Thyroid gland (tissue), 4 donors: ENCODE measurements at regions of chr1 and their contacts with region 1.

Region 1: DNA sequence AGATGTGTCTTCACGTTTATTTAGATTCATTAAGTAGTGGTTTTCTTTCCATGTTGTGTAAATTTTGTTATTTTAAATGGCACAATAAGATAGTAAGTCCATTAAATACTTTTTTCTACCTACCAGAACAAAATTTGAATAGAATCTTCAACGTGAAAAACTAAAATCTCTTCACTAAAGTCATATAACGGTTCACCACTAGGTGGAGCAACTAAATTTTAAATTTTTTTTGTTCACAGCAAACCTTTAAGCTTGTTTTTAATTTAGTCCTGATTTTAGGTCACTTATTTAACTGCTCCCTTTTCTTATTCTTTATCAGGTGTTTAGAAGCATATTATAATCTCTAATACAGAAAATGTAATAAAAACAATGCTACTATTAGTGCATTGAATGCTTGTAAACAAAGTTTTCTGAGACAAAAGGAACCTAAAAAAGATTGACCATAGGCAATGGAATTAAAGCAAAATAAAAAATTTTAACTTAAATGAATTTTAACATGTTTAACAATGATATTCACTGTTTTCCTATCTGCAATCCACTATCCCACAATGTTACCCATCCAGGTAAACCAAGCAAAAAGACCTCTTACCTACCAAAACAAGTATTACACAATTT is 28.3 kb upstream of the PKN2 start:
- DNase-seq: no peak
- H3K4me3 ChIP-seq: no peak overlapping the region
- H3K27ac ChIP-seq: no peak overlapping the region
- H3K4me1 ChIP-seq: no peaks in the 10 kb centered on the region
- H3K27me3 ChIP-seq: no peaks in the 10 kb centered on the region
- CTCF ChIP-seq: peak; percentile 18 to 69 (median 54)
- POLR2A ChIP-seq: no peak

Region 2: DNA sequence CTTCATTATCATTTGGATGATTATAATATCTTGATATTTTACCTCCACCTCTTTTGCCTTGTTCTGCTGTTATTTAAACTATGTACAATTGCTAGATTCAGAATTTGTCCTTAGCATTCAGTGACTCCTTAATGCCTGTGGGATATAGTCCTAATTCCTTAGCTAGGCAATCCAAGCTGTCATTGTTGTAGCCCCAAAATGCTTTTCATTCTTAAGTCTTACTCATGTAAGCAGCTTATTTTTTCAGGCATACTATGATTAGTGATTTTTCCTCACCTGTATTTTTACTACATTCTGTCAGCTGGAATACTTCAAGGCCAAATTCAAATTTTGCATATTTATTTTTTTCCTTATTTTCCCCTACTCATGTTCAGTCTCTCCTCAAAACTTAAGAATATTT is 41.7 kb after region 1 on chr1:
- intact Hi-C with region 1: no loop called
- DNase-seq: no peak
- H3K4me3 ChIP-seq: no peak overlapping the region
- H3K27ac ChIP-seq: no peak overlapping the region
- H3K4me1 ChIP-seq: peaks cover 7 to 8% of the 10 kb centered on the region in 2 donors
- H3K27me3 ChIP-seq: no peaks in the 10 kb centered on the region
- CTCF ChIP-seq: no peak
- POLR2A ChIP-seq: no peak

Region 3: DNA sequence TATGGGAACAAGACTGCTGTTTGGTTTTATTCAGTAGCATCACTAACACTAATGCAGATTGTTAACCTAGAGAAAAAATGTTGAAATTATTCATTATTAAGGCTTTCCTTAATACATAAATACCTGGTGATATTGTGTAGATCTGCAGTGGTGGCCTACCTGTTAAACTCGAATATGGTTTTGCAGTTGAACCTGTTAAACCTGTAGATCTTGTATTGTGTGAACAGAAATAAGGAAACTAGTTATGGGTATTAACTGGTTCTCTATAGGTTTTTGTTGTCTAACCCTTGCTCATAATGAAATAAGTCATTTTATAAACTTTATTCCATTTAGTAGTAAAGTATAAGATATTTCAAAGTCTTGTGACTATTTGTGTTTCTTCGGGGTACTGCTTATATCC is 52.2 kb after region 1 on chr1:
- intact Hi-C with region 1: no loop called
- DNase-seq: no peak
- H3K4me3 ChIP-seq: no peak overlapping the region
- H3K27ac ChIP-seq: no peak overlapping the region
- H3K4me1 ChIP-seq: no peaks in the 10 kb centered on the region
- H3K27me3 ChIP-seq: no peaks in the 10 kb centered on the region
- CTCF ChIP-seq: no peak
- POLR2A ChIP-seq: no peak

Region 4: DNA sequence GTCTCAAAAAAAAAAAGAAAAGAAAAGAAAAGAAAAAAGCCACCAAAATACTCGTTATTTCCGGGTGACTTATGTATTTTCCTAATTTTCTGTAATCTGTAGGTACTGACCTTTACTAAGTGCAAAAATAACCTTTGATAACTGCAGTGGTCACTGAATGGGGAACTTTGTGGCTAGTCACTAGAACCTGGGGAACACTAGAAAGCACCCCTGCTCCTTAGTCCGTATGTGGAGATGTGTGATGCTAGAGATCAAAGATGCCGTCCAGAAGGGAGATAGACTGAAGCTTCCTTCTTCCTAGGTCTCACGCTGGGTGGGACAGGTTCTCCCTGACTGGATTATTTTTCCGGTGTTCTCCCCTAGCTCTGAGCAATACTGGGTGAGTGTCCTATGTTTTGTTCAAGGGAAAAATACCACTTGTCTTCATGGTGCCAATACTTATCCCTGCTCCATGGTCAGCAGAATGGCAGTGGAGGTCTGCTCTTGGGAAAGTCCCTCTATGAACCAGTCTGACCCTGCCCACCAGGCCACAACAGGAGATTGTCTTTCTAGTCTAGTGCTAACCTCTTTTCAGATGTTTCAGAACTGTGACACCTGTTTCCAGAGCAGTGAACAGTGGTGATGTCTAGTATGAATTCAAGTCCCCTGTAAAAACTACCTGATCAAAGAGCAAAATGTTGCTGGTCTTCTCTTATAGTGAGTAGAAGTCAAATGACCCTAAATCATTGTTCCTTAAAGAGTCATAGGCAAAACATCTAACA is 195.7 kb after region 1 on chr1:
- intact Hi-C with region 1: no loop called
- DNase-seq: no peak
- H3K4me3 ChIP-seq: no peak overlapping the region
- H3K27ac ChIP-seq: no peak overlapping the region
- H3K4me1 ChIP-seq: no peaks in the 10 kb centered on the region
- H3K27me3 ChIP-seq: no peaks in the 10 kb centered on the region
- CTCF ChIP-seq: no peak
- POLR2A ChIP-seq: no peak

Region 5: GRCh38 chr1:88877382-88877825 is 221.6 kb after region 1 on chr1:
- intact Hi-C with region 1: loop called (anchors 5 kb)
- DNase-seq: peak; percentile 21 to 33
- H3K4me3 ChIP-seq: no peak overlapping the region
- H3K27ac ChIP-seq: no peak overlapping the region
- H3K4me1 ChIP-seq: peaks cover 9 to 24% of the 10 kb centered on the region in 2 donors
- H3K27me3 ChIP-seq: no peaks in the 10 kb centered on the region
- CTCF ChIP-seq: peak in 4 of 6 experiments; percentile 41 to 68 (median 60)
- POLR2A ChIP-seq: no peak